Activated CD4-positive, alpha-beta T cell treated with anti-CD3 and anti-CD28 coated beads for 36 hours (primary cell): ENCODE measurements at regions of chr14 and their contacts with region 1.

Region 1: DNA sequence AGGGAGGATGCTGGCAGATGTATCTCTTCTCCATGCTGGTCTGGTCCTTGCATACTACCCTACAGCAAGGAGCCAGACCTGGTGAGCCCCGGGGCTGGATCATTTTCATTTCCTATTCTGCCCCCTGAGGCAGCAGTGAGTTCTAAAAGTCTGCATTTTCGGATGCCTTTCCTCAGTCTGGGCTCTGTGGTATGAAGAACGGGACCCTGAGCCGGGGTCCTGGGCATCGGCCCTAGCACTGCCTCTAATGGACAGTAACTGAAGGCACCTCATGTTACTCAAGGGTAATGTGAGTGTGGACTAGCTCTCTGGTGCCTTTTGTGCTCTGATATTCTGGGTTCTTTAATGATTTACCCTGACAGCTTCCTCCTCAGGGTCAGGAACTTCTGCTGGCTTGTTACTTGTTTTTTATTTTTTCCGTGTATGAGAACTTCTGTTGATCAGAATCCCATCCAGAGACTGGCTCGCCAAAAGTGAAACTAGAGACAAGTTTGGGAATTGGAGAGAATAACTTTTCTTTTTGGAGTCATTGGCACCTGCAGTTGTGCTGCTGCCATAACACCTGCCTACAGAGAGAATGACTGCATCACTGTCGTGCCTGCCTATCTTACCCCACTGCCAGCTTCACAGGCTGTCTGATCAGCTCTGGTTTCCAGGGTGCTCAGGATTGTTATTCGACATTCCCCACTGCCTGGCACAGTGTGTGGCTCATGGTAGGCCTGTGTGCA is 62.3 kb downstream of the SUSD6 start:
- DNase-seq: peak; percentile 40
- ATAC-seq: no peak
- H3K4me3 Mint-ChIP-seq: peak overlapping the region; percentile 60
- H3K27ac Mint-ChIP-seq: peak overlapping the region; percentile 99
- H3K4me1 Mint-ChIP-seq: peaks cover 95% of the 10 kb centered on the region
- H3K27me3 Mint-ChIP-seq: no peaks in the 10 kb centered on the region

Region 2: DNA sequence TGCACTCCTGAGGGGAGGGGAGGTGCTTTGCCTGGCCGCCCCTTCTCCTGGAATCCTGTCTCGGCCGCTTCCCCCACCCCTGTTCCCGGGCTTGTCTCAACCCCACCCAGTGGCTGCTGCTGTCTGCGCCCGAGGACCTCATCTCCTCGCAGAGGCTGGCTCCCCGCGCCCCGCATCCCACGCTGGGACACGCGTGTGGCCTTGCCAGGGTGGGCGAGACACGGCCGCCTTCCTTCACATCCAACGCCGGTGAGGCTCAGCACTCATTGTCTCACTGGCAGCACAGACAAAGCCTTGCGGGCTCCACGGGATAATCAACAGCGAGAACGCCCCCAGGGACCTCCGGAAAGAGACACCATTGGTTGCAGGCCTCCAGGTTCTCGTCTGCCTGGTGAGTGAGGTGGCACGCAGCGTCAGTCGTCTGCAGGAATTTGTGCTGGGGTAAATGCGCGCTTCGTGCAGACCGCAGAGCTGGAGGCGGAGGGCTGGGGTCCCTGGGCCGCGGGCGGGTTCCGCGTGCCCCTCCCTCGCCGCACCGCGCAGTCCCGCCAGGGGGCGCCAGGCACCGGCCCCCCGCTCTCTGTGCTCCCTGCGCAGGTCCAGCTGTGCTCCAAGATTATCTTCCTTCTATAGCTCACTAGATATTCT is 125.9 kb before region 1 on chr14:
- CTCF ChIA-PET with region 1: no interaction called
- POLR2A ChIA-PET with region 1: no interaction called
- intact Hi-C with region 1: no loop called
- DNase-seq: peak; percentile 66
- ATAC-seq: peak; percentile 50
- H3K4me3 Mint-ChIP-seq: no peak overlapping the region
- H3K27ac Mint-ChIP-seq: no peak overlapping the region
- H3K4me1 Mint-ChIP-seq: peaks cover 9% of the 10 kb centered on the region
- H3K27me3 Mint-ChIP-seq: peaks cover 30% of the 10 kb centered on the region

Region 3: GRCh38 chr14:69611201-69612011 is 62.3 kb before region 1 on chr14 and contains the start of gene SUSD6:
- CTCF ChIA-PET with region 1: interaction called, 5 read pairs
- POLR2A ChIA-PET with region 1: interaction called, 5 read pairs
- intact Hi-C with region 1: loop called (anchors 1 kb)
- DNase-seq: peak; percentile 95
- ATAC-seq: peak; percentile 74
- H3K4me3 Mint-ChIP-seq: peak within 1 kb of the TSS; percentile 87
- H3K27ac Mint-ChIP-seq: peak within 1 kb of the TSS; percentile 99
- H3K4me1 Mint-ChIP-seq: peaks cover 48% of the 10 kb centered on the region
- H3K27me3 Mint-ChIP-seq: no peaks in the 10 kb centered on the region
- total RNA-seq, gene SUSD6: 57.9 to 59.3 TPM

Region 4: GRCh38 chr14:69637503-69638030 is 36.2 kb before region 1 on chr14:
- CTCF ChIA-PET with region 1: interaction called, 4 read pairs
- POLR2A ChIA-PET with region 1: interaction called, 9 read pairs
- intact Hi-C with region 1: loop called (anchors 1 kb)
- DNase-seq: peak; percentile 44
- ATAC-seq: peak; percentile 27
- H3K4me3 Mint-ChIP-seq: peak overlapping the region; percentile 52
- H3K27ac Mint-ChIP-seq: peak overlapping the region; percentile 87
- H3K4me1 Mint-ChIP-seq: peaks cover 92% of the 10 kb centered on the region
- H3K27me3 Mint-ChIP-seq: no peaks in the 10 kb centered on the region

Region 5: GRCh38 chr14:69657950-69658355 is 15.8 kb before region 1 on chr14:
- CTCF ChIA-PET with region 1: interaction called, 5 read pairs
- POLR2A ChIA-PET with region 1: interaction called, 8 read pairs
- intact Hi-C with region 1: loop called in 1 of 2 experiments (anchors 1 kb)
- DNase-seq: no peak
- ATAC-seq: no peak
- H3K4me3 Mint-ChIP-seq: no peak overlapping the region
- H3K27ac Mint-ChIP-seq: peak overlapping the region; percentile 53
- H3K4me1 Mint-ChIP-seq: peaks cover 85% of the 10 kb centered on the region
- H3K27me3 Mint-ChIP-seq: no peaks in the 10 kb centered on the region

Region 6: GRCh38 chr14:69715725-69716477 is 42.2 kb after region 1 on chr14:
- CTCF ChIA-PET with region 1: interaction called, 7 read pairs
- POLR2A ChIA-PET with region 1: no interaction called
- intact Hi-C with region 1: loop called in 1 of 2 experiments (anchors 5 kb)
- DNase-seq: peak; percentile 28
- ATAC-seq: peak; percentile 30
- H3K4me3 Mint-ChIP-seq: no peak overlapping the region
- H3K27ac Mint-ChIP-seq: peak overlapping the region; percentile 67
- H3K4me1 Mint-ChIP-seq: peaks cover 38% of the 10 kb centered on the region
- H3K27me3 Mint-ChIP-seq: no peaks in the 10 kb centered on the region